Transverse colon (tissue), 4 donors: ENCODE measurements at regions of chr1 and their contacts with region 1.

Region 1: DNA sequence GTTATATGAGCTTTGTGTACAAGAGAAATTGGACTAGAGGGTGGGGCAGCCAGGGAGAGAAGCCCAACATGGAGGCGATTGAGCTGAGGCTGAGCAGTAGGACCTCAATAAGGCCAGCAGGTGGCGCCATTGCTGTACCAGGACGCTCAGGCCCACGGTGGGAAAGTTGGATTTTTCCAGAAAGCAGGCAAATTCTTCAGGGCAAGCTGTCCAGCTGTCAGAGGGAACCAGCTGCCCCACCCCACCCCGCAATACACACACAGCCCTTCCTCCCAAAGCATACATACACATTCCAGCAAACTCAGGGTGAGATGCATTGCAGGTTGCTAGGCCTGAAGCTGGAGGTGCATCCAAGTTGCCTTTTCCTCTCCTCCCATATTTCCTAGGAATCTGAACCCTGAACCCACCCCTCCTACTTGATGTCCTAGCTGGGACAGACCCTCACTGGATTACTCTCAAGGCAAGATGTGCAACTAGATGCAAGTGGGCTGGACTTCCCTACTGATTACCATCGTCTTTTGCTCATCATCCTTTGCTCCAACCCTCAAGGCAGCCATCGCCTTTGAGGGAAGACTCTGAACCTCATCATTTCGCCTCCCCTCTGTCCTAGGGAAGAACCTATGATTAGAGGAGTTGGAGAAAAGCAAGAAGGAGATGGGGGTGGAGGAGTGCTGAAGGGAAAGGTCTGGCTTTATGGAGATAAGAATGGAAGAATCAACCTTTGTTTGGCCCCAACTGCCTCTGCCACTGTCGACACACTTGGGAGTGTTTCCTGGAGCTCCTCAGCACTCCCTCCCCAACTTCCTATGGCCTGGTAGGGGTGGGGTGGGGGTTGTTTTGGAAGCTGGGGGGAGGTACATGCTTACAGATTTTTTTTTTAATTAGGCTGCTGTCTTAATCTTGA is 25.5 kb downstream of the CD34 start:
- DNase-seq: peak; percentile 88
- H3K4me3 ChIP-seq: no peak overlapping the region
- H3K27ac ChIP-seq: peak overlapping the region; percentile 17 to 56 (median 50)
- H3K4me1 ChIP-seq: peaks cover 10 to 42% (median 18%) of the 10 kb centered on the region in 4 donors
- H3K27me3 ChIP-seq: no peaks in the 10 kb centered on the region
- CTCF ChIP-seq: peak; percentile 96 to 97 (median 97)
- EP300 ChIP-seq: no peak
- POLR2A ChIP-seq: no peak

Region 2: GRCh38 chr1:207963427-207964194 is 78.2 kb after region 1 on chr1:
- in situ Hi-C with region 1: loop called (anchors 5 to 10 kb)
- intact Hi-C with region 1: loop called (anchors 5 kb)
- DNase-seq: peak; percentile 93
- H3K4me3 ChIP-seq: peak overlapping the region; percentile 50 to 77 (median 52)
- H3K27ac ChIP-seq: peak overlapping the region; percentile 94 to 97 (median 96)
- H3K4me1 ChIP-seq: peaks cover 8 to 32% (median 25%) of the 10 kb centered on the region in 4 donors
- H3K27me3 ChIP-seq: peaks cover 17% of the 10 kb centered on the region
- CTCF ChIP-seq: peak; percentile 91 to 100 (median 99)
- EP300 ChIP-seq: no peak
- POLR2A ChIP-seq: peak; percentile 94